Heart left ventricle (tissue), 16 donors: ENCODE measurements at regions of chr10 and their contacts with region 1.

Region 1: GRCh38 chr10:77004917-77005564 is 632.6 kb downstream of the KCNMA1 start:
- DNase-seq: peak in 1 of 5 donors; percentile 14
- ATAC-seq: peak in 3 of 4 donors; percentile 58 to 77 (median 75)
- H3K4me3 ChIP-seq: no peak overlapping the region
- H3K27ac ChIP-seq: peak overlapping the region in 2 of 12 donors; percentile 5 to 57
- H3K4me1 ChIP-seq: peaks cover 0 to 9% (median 0%) of the 10 kb centered on the region in 12 donors
- H3K27me3 ChIP-seq: peaks cover 0 to 4% (median 0%) of the 10 kb centered on the region in 9 donors
- CTCF ChIP-seq: peak; percentile 61 to 88 (median 78)
- POLR2A ChIP-seq: no peak

Region 2: DNA sequence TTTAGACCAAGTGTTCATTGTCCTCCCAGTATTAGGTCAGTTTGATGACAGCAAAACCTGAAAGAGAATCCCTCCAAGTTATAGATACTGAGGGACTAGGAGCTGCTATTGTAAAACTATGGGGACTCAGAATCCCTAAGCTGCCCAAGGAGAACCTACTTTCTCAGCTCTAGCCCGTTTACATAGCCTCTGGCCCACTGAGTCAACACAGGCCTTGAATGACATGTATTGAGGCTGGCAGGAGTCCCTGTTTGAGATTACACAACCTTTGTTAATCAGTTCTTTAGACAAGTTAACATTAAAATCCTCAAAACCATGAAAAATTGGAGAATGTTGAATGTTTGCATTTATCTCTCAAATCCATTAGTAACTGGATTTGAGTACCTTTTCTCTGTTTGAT is 446.5 kb before region 1 on chr10:
- intact Hi-C with region 1: loop called in 1 of 10 experiments (anchors 5 kb)
- DNase-seq: no peak
- ATAC-seq: no peak
- H3K4me3 ChIP-seq: no peak overlapping the region
- H3K27ac ChIP-seq: peak overlapping the region in 1 of 12 donors; percentile 35
- H3K4me1 ChIP-seq: peaks cover 0 to 35% (median 10%) of the 10 kb centered on the region in 12 donors
- H3K27me3 ChIP-seq: no peaks in the 10 kb centered on the region
- CTCF ChIP-seq: no peak
- POLR2A ChIP-seq: no peak

Region 3: GRCh38 chr10:77111611-77112550 is 106.8 kb after region 1 on chr10:
- intact Hi-C with region 1: loop called in 1 of 10 experiments (anchors 10 kb)
- DNase-seq: no peak
- ATAC-seq: peak in 3 of 4 donors; percentile 66 to 72 (median 70)
- H3K4me3 ChIP-seq: no peak overlapping the region
- H3K27ac ChIP-seq: no peak overlapping the region
- H3K4me1 ChIP-seq: peaks cover 0 to 10% (median 0%) of the 10 kb centered on the region in 12 donors
- H3K27me3 ChIP-seq: peaks cover 0 to 9% (median 0%) of the 10 kb centered on the region in 9 donors
- CTCF ChIP-seq: peak; percentile 64 to 86 (median 79)
- POLR2A ChIP-seq: no peak